ENCODE measurements at regions of chr20 and their contacts with region 1.

Region 1: GRCh38 chr20:48620519-48621254 is 207.1 kb downstream of the PREX1 start:
- DNase-seq: peak; percentile 52
- ATAC-seq: peak; percentile 97
- H3K4me3 ChIP-seq: no peak overlapping the region
- H3K27ac ChIP-seq: no peak overlapping the region
- H3K4me1 ChIP-seq: no peaks in the 10 kb centered on the region
- H3K27me3 ChIP-seq: peaks cover 9% of the 10 kb centered on the region; the same call in 1 of the 2 replicates
- CTCF ChIP-seq: peak; percentile 89
- POLR2A ChIP-seq: peak; percentile 53; the same call in 1 of the 2 replicates
- RAD21 ChIP-seq: peak; percentile 92

Region 2: DNA sequence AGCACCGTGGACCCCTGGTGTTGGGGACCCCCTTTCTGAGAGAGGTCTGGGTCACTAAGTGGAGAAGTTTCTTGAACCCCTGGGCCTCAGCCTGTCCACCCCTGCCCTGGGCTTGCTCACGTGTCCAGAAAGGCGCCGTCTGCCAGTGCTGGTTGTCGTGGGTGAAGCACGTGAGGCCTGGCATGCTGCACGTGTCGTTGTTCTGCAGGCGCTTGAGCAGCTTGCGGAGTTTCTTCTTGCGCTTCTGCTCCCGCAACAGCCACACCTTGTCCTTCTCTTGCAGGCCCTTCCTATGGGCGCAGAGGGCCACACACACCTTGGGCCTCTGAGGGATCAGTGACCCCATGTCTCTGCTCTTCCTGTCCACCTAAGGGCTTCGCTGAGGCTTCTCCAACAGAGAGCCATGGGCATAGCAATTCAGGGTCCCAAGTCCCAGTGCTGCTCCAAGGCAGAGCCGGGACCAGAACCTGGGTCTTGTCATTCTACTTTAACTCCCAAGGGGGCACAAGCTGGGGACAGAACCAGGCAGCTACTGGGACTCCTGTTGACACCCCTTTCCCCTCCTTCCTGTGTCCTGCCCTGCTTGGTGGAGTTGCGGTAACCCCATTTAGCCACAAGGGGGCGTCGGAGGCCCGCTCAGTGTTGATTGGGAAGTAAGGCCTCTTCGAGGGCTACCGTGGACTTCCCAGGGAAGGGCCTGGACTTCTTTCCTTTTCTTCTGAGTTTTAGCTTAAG is 957.2 kb before region 1 on chr20:
- CTCF ChIA-PET with region 1: interaction called, 5 read pairs
- POLR2A ChIA-PET with region 1: no interaction called
- dilution Hi-C with region 1: no loop called
- in situ Hi-C with region 1: no loop called
- intact Hi-C with region 1: loop called (anchors 1 kb)
- DNase-seq: peak; percentile 70
- ATAC-seq: peak; percentile 97
- H3K4me3 ChIP-seq: no peak overlapping the region
- H3K27ac ChIP-seq: no peak overlapping the region
- H3K4me1 ChIP-seq: no peaks in the 10 kb centered on the region
- H3K27me3 ChIP-seq: no peaks in the 10 kb centered on the region
- CTCF ChIP-seq: peak; percentile 92
- POLR2A ChIP-seq: no peak
- RAD21 ChIP-seq: peak; percentile 81

Region 3: GRCh38 chr20:47677635-47678453 is 942.8 kb before region 1 on chr20:
- CTCF ChIA-PET with region 1: interaction called, 4 read pairs
- POLR2A ChIA-PET with region 1: no interaction called
- dilution Hi-C with region 1: no loop called
- in situ Hi-C with region 1: loop called (anchors 5 kb)
- intact Hi-C with region 1: loop called (anchors 1 kb)
- DNase-seq: peak; percentile 16
- ATAC-seq: peak; percentile 42; the same call in 1 of the 2 replicates
- H3K4me3 ChIP-seq: no peak overlapping the region
- H3K27ac ChIP-seq: no peak overlapping the region
- H3K4me1 ChIP-seq: no peaks in the 10 kb centered on the region; the same call in 1 of the 2 replicates
- H3K27me3 ChIP-seq: peaks cover 3% of the 10 kb centered on the region; the same call in 1 of the 2 replicates
- CTCF ChIP-seq: peak; percentile 65
- POLR2A ChIP-seq: no peak
- RAD21 ChIP-seq: peak; percentile 68

Region 4: GRCh38 chr20:47785854-47786764 is 834.6 kb before region 1 on chr20:
- CTCF ChIA-PET with region 1: interaction called, 5 read pairs
- POLR2A ChIA-PET with region 1: no interaction called
- dilution Hi-C with region 1: no loop called
- in situ Hi-C with region 1: loop called (anchors 5 kb)
- intact Hi-C with region 1: loop called (anchors 1 kb)
- DNase-seq: peak; percentile 71
- ATAC-seq: peak; percentile 72
- H3K4me3 ChIP-seq: peak overlapping the region; percentile 37
- H3K27ac ChIP-seq: peak overlapping the region; percentile 21; the same call in 1 of the 2 replicates
- H3K4me1 ChIP-seq: peaks cover 4% of the 10 kb centered on the region; the same call in 1 of the 2 replicates
- H3K27me3 ChIP-seq: peaks cover 54% of the 10 kb centered on the region
- CTCF ChIP-seq: peak; percentile 58
- POLR2A ChIP-seq: no peak
- RAD21 ChIP-seq: peak; percentile 70

Region 5: DNA sequence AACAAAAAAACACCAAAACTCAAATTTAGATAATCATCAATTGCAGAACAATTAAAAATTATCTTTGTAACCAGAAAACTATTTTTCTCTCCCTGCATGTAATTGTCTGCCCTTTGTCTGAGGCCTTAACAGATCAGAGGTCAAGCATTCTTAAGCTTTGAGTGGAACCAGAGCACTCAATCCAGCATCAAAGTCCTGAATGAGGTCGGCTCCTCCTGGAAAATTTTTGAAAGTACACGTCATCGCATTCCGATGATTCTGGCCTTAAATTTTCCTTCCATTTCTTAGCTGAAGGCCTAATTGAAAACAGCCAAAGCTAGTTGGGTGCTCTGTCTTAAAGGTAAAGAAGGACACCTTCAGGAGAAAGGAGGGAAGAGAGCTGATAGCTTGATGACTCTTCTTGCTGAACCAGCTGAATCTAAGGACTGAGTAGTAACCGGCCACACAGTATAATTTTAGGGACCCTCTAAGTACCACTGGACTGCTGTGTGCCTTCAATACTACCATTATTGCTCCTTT is 325.2 kb before region 1 on chr20:
- CTCF ChIA-PET with region 1: interaction called, 7 read pairs
- POLR2A ChIA-PET with region 1: no interaction called
- dilution Hi-C with region 1: no loop called
- in situ Hi-C with region 1: no loop called
- intact Hi-C with region 1: loop called (anchors 5 kb)
- DNase-seq: peak; percentile 94
- ATAC-seq: peak; percentile 91
- H3K4me3 ChIP-seq: no peak overlapping the region
- H3K27ac ChIP-seq: peak overlapping the region; percentile 47; the same call in 1 of the 2 replicates
- H3K4me1 ChIP-seq: peaks cover 14% of the 10 kb centered on the region
- H3K27me3 ChIP-seq: no peaks in the 10 kb centered on the region; the same call in 1 of the 2 replicates
- CTCF ChIP-seq: peak; percentile 53
- POLR2A ChIP-seq: no peak
- RAD21 ChIP-seq: peak; percentile 62

Measured in IMR-90 (cell line).